Calu3 (cell line): ENCODE measurements at regions of chr14 and their contacts with region 1.

Region 1: DNA sequence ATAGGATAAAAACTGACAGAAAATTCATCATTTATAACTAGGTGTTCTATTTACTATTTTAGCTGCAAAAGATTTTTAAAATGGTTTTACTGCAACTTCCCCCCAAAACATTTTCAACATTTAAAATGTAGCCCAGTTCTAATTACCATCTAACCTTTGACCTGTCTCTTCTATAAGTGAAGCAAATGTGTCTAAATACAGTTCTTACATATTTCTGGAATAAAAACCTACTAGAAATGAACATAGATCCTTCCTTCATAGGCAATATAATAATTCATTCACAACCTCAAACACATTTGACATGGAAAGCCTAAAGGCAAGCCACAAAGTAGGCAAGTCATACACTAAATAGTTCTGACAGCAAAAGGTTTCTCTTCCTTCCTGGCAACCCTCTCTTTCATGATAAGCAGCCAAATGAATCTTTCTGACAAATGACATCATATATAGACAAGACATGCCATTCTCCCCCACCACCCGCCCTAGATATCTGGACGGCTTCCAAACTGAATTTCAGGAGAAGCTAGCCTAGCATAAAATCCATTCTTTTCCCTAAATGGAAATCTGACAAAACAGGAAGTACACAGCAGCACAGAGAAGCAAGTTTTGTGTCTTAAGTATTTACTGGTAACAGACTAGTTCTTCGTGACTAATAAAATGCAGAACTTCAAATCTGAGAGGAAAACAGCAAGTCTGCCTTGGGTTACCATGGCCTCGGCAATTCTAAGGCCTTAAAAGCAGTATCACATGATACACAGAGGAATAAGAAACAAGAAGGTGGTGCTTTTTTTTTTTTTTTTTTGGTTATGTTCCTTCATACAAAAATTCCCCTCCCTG is 17.2 kb upstream of the ARID4A start:
- DNase-seq: peak; percentile 66
- H3K4me3 Mint-ChIP-seq: peak overlapping the region; percentile 55
- H3K27ac Mint-ChIP-seq: peak overlapping the region; percentile 78
- H3K4me1 Mint-ChIP-seq: peaks cover 54% of the 10 kb centered on the region
- H3K27me3 Mint-ChIP-seq: no peaks in the 10 kb centered on the region
- CTCF ChIP-seq: no peak

Region 2: DNA sequence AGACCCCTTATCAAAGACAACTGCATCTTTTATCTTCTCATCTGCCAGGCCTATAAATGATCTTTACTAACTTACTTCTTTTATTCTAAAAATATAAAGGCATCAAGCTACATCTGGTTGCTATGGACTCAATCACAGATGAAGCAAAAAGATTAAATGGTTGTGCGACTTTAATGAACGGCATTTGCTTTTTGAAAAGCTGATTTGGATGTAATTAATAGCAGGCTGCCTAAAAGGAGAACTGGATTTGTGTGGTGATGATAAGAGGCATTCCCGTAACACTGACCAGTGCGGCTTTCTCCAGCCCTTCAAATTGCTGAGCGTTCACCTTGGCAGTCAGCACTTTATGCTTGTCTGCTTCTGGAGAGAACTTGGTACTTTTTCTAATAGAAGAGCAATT is 233.0 kb before region 1 on chr14:
- CTCF ChIA-PET with region 1: no interaction called
- intact Hi-C with region 1: no loop called
- DNase-seq: no peak
- H3K4me3 Mint-ChIP-seq: no peak overlapping the region
- H3K27ac Mint-ChIP-seq: no peak overlapping the region
- H3K4me1 Mint-ChIP-seq: no peaks in the 10 kb centered on the region
- H3K27me3 Mint-ChIP-seq: peaks cover 67% of the 10 kb centered on the region
- CTCF ChIP-seq: no peak

Region 3: GRCh38 chr14:58244556-58245387 is 36.4 kb before region 1 on chr14 and contains the start of gene PSMA3:
- CTCF ChIA-PET with region 1: interaction called, 4 read pairs
- intact Hi-C with region 1: loop called (anchors 5 kb)
- DNase-seq: peak; percentile 97
- H3K4me3 Mint-ChIP-seq: peak within 1 kb of the TSS; percentile 91
- H3K27ac Mint-ChIP-seq: peak within 1 kb of the TSS; percentile 97
- H3K4me1 Mint-ChIP-seq: peaks cover 31% of the 10 kb centered on the region
- H3K27me3 Mint-ChIP-seq: no peaks in the 10 kb centered on the region
- CTCF ChIP-seq: no peak
- total RNA-seq, gene PSMA3: 222 and 260 TPM in 2 replicates

Region 4: GRCh38 chr14:58637391-58638230 is 356.4 kb after region 1 on chr14 and contains the start of gene DACT1:
- CTCF ChIA-PET with region 1: no interaction called
- intact Hi-C with region 1: no loop called
- DNase-seq: peak; percentile 30
- H3K4me3 Mint-ChIP-seq: peak within 1 kb of the TSS; percentile 75
- H3K27ac Mint-ChIP-seq: no peak within 1 kb of the TSS
- H3K4me1 Mint-ChIP-seq: no peaks in the 10 kb centered on the region
- H3K27me3 Mint-ChIP-seq: peaks cover 65% of the 10 kb centered on the region
- CTCF ChIP-seq: no peak
- total RNA-seq, gene DACT1: not detected in 2 replicates

Region 5: DNA sequence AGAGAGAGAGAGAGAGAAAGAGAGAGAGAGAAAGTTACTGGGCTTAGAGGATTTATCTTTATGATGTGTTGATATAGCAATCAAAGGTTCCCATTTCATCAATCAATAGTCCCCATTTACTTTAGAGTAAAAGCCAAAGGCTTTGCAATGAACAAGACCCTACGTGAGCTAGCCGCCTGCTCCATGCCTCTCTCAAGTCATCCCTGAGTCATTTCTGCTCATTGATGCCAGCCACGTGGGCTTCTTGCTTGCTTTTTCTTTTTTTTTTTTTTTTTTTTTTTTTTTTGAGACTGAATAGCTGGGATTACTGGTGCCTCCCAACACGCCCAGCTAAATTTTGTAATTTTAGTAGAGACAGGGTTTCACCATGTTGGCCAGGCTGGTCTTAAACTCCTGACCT is 1113.1 kb after region 1 on chr14:
- CTCF ChIA-PET with region 1: no interaction called
- intact Hi-C with region 1: no loop called
- DNase-seq: no peak
- H3K4me3 Mint-ChIP-seq: no peak overlapping the region
- H3K27ac Mint-ChIP-seq: no peak overlapping the region
- H3K4me1 Mint-ChIP-seq: no peaks in the 10 kb centered on the region
- H3K27me3 Mint-ChIP-seq: no peaks in the 10 kb centered on the region
- CTCF ChIP-seq: no peak